A673 (cell line): ENCODE measurements at regions of chr3 and their contacts with region 1.

Region 1: DNA sequence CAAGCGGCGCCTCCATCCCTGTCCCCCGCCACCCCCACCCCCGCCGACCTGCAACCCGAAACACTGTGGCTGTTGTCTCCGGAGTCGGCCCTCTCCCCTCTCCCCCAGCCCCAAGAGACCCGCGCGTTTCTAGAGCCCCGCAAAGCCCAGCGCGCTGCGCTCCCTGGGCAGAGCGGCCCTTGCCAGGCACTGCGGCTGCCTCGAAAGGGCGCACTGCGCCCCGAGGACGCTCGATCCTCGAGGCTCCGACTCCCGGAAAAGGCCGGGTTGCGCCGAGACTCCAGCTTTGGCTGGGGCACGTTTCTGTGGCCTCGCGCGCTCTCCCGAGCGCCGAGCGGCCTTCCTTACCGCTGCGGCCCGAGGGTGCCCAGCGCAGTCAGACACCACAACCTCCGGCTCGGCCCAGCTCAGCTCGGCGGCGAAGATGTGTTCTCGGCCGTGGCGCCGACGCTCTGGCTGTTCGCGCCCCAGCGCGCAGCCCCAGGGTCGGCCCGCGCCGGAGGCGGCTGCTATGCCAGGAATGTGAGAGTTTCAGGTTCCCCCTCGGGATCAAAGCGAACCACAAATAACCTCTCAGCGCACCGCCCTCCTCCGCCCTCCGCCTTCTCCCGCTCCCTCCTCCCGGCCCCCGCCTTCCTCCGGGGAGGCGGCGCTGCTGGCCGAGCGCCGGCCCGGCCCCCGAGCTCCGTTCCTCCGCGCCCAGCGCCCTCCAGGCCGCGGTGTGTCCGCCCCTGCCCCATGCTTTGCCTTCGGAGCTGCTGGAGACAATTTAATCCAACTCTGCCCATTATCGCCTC is at the start of gene AMOTL2:
- DNase-seq: peak; percentile 93
- H3K4me3 ChIP-seq: peak within 1 kb of the TSS; percentile 68
- H3K27ac ChIP-seq: peak within 1 kb of the TSS; percentile 98
- H3K4me1 ChIP-seq: peaks cover 40% of the 10 kb centered on the region
- H3K27me3 ChIP-seq: no peaks in the 10 kb centered on the region
- CTCF ChIP-seq: no peak
- total RNA-seq, gene AMOTL2: 38.9 and 59.6 TPM in 2 replicates

Region 2: DNA sequence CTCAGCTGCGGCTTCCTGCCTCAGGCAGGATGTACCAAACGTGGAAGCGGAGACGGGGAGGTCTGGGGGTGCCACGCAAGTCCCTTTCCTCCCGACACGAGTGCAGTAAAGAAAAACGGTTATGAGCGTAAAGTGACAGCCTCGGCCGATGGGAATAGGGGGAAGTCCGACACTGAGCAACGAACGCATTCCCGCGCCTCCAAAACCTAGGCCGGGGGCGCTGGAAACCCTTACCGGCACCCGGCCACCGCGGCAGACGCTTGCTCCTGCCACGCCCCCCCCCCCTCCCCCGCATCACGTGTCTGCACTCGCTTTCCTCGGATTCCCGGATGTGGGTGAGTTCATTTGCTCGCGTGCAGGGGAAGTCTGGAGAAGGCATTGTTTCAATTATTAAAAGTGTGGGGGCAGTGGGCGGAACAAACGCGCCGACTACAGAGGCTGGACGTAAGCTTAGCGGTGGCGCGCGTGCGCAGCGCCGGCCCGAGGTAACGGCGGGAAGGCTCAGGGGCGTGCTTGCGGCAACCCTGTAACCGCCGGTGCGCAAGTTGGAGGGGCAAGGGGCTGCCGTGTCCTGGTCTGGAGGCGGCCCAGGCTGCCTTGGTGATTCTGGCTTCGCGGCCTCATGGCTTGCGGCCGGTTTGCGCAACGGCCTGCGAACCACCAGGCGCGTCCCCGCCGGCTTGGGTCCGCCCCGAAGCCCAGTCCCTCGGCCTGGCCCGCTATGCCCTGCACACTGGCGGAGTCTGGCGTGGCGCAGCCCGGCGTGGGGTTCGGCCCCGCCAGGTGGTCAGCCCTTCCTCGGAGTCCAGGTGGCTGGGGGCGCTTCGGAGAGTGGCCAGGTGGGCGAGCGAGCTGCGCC is 111.8 kb after region 1 on chr3 and contains the starts of genes ANAPC13 and CEP63:
- CTCF ChIA-PET with region 1: no interaction called
- POLR2A ChIA-PET with region 1: no interaction called
- intact Hi-C with region 1: loop called (anchors 5 kb)
- DNase-seq: peak; percentile 100
- H3K4me3 ChIP-seq: peak within 1 kb of the TSS; percentile 80
- H3K27ac ChIP-seq: peak within 1 kb of the TSS; percentile 98
- H3K4me1 ChIP-seq: peaks cover 14% of the 10 kb centered on the region
- H3K27me3 ChIP-seq: no peaks in the 10 kb centered on the region
- CTCF ChIP-seq: no peak
- total RNA-seq, gene ANAPC13: 60.2 and 69.7 TPM in 2 replicates
- total RNA-seq, gene CEP63: 29.2 and 31.8 TPM in 2 replicates